AG04450 (cell line): ENCODE measurements at regions of chr4 and their contacts with region 1.

Region 1: GRCh38 chr4:71732706-71733105 is 51.2 kb downstream of the GC start:
- DNase-seq: peak; percentile 18
- H3K4me3 ChIP-seq: no peak overlapping the region
- H3K27ac ChIP-seq: no peak overlapping the region
- H3K27me3 ChIP-seq: peaks cover 9% of the 10 kb centered on the region
- CTCF ChIP-seq: peak; percentile 54

Region 2: DNA sequence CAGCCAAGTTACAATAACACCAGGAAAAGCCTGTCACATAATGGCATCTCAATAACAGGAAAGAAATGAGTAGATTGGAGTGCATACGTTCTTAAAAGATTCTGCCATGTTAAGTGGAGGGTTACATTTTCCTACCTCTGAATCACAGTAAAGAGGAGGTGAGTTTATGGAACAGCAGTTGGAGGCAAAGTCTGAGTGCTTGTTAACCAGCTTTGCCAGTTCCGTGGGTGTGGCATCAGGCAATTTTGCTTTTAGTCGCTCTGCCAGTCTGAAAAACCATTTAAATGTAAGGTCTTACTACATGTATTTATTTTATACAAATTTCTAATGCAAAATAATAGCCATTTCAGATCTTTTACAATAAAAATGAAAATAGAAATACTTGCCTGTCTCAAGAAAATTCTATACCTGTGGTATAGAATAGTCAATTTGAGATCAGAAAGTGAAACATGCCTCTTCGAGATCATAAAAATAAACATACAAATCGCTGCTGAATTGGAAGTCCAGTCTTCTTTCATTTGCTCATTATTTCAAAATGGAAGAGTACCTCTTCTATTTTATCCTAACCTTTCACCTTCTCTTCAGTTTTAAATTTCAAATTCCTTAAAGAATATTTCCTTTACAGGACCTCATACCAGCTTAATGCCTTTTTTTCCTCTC is 19.8 kb after region 1 on chr4:
- CTCF ChIA-PET with region 1: no interaction called
- POLR2A ChIA-PET with region 1: no interaction called
- DNase-seq: no peak
- H3K4me3 ChIP-seq: no peak overlapping the region
- H3K27ac ChIP-seq: no peak overlapping the region
- H3K27me3 ChIP-seq: no peaks in the 10 kb centered on the region
- CTCF ChIP-seq: no peak

Region 3: GRCh38 chr4:72286185-72286584 is 553.5 kb after region 1 on chr4:
- CTCF ChIA-PET with region 1: interaction called, 13 read pairs
- POLR2A ChIA-PET with region 1: no interaction called
- DNase-seq: no peak
- H3K4me3 ChIP-seq: no peak overlapping the region
- H3K27ac ChIP-seq: no peak overlapping the region
- H3K27me3 ChIP-seq: no peaks in the 10 kb centered on the region
- CTCF ChIP-seq: peak; percentile 34